GM18951 (cell line): ENCODE measurements at regions of chr14 and their contacts with region 1.

Region 1: DNA sequence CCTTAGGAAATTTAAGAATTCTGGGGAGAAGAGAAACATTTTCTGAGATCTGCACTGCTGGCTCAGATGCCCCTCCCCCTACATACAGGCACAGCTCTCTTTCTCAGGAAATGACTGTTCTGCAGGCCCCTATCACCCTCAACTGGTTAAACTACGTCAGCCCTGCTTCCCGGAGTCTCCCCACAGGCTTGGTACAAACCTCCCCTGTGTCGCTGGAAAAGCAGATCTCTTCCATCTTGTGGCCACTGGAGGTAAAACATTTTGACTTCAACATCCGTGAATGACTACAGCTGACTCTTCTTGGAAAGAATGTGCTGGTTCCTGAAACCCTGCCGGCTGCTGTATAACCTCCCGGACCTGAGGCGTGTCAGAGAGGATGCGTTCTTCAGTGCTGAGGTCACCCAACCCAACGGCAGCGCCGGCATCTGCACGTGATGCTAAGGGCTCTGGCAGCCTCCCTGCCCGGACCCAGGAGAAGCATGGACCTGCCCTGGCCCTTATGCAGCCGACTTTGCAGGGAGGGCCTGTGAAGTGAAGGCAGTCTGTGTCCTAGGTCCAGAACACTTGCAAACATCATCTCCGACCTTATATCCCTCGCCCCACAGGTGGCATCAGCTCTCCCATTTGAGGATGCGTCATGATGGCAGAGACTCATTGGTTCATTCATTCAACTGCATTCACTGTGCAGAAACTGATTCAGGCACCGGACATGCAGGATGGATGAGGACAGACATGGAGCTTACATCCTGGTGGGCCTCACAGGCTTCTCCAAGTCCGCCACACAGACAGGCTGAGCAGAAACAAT is 129.3 kb downstream of the GCH1 start:
- POLR2A ChIP-seq: no peak

Region 2: GRCh38 chr14:54572316-54572715 is 201.1 kb before region 1 on chr14:
- in situ Hi-C with region 1: loop called (anchors 10 kb)
- POLR2A ChIP-seq: no peak